ENCODE measurements at regions of chr12 and their contacts with region 1.

Region 1: GRCh38 chr12:89589753-89590152 is 63.9 kb upstream of the POC1B start:
- DNase-seq: no peak
- H3K4me3 ChIP-seq: no peak overlapping the region
- H3K4me3 Mint-ChIP-seq: no peak overlapping the region
- H3K27ac Mint-ChIP-seq: no peak overlapping the region
- H3K4me1 ChIP-seq: no peaks in the 10 kb centered on the region
- H3K4me1 Mint-ChIP-seq: no peaks in the 10 kb centered on the region
- H3K27me3 ChIP-seq: no peaks in the 10 kb centered on the region
- H3K27me3 Mint-ChIP-seq: no peaks in the 10 kb centered on the region
- CTCF ChIP-seq: no peak

Region 2: DNA sequence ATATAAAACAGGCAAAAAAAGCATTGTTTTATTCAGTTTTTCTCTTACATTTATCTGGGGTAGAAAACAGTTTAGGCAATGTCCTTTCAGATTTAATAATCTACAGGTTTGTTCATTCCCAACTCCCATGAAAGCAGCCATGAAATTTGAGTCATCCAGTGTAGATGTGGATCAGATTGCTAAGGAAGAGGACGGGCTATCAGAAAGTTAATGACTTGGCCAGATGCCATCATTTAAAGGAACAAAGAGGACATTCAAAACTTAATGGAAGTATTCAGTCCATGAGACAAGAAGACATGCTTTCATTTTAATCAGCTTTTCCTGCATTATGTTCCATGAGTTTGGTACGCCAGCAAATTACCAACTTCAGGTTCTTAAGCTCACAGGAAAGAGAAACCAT is 32.8 kb before region 1 on chr12:
- CTCF ChIA-PET with region 1: no interaction called
- POLR2A ChIA-PET with region 1: no interaction called
- intact Hi-C with region 1: no loop called
- DNase-seq: no peak
- H3K4me3 ChIP-seq: no peak overlapping the region
- H3K4me3 Mint-ChIP-seq: no peak overlapping the region
- H3K27ac Mint-ChIP-seq: no peak overlapping the region
- H3K4me1 ChIP-seq: no peaks in the 10 kb centered on the region
- H3K4me1 Mint-ChIP-seq: no peaks in the 10 kb centered on the region
- H3K27me3 ChIP-seq: no peaks in the 10 kb centered on the region
- H3K27me3 Mint-ChIP-seq: no peaks in the 10 kb centered on the region
- CTCF ChIP-seq: no peak

Region 3: GRCh38 chr12:89576572-89577220 is 13.1 kb before region 1 on chr12:
- CTCF ChIA-PET with region 1: no interaction called
- POLR2A ChIA-PET with region 1: no interaction called
- intact Hi-C with region 1: loop called (anchors 1 kb)
- DNase-seq: no peak
- H3K4me3 ChIP-seq: no peak overlapping the region
- H3K4me3 Mint-ChIP-seq: no peak overlapping the region
- H3K27ac Mint-ChIP-seq: peak overlapping the region; percentile 15
- H3K4me1 ChIP-seq: peaks cover 11% of the 10 kb centered on the region
- H3K4me1 Mint-ChIP-seq: peaks cover 17% of the 10 kb centered on the region
- H3K27me3 ChIP-seq: no peaks in the 10 kb centered on the region
- H3K27me3 Mint-ChIP-seq: no peaks in the 10 kb centered on the region
- CTCF ChIP-seq: no peak

Region 4: DNA sequence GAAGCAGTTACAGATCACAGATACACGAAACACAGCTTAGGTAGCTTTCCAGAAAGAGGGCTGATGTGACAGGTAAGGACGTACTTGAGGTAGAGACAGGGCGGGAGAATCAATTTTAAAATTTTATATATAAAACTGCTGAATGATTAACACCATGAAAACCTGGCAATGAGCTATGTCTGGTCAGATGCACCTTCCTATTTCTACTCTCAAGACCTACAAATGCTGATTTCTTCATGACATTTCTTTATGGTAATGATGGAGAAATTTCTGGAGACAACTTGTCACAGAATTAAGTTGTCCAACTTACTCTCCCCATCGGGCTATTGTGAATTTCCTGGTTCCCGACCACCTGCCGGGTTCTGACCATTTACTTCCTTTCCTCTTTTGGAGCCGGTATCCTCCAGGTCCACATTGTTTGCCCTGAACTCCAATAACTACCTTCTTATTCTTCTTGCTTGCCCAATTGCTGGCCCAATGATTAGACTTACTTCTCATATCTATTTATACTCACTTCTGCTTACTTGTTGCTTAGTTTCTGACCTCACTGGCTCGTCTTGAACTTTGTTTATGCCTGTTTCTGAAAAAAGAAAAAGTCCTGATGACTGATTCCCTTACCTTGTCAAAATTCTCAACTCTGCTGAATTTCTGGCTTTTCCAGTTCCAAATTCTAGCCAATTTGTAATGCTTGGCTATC is 131.7 kb after region 1 on chr12:
- CTCF ChIA-PET with region 1: no interaction called
- POLR2A ChIA-PET with region 1: no interaction called
- intact Hi-C with region 1: no loop called
- DNase-seq: no peak
- H3K4me3 ChIP-seq: no peak overlapping the region
- H3K4me3 Mint-ChIP-seq: no peak overlapping the region
- H3K27ac Mint-ChIP-seq: no peak overlapping the region
- H3K4me1 ChIP-seq: no peaks in the 10 kb centered on the region
- H3K4me1 Mint-ChIP-seq: no peaks in the 10 kb centered on the region
- H3K27me3 ChIP-seq: no peaks in the 10 kb centered on the region
- H3K27me3 Mint-ChIP-seq: no peaks in the 10 kb centered on the region
- CTCF ChIP-seq: no peak

Measured in Caco-2 (cell line).